CD8-positive, alpha-beta T cell (primary cell): ENCODE measurements at regions of chr2 and their contacts with region 1.

Region 1: GRCh38 chr2:240245706-240246105 is 105.2 kb upstream of the OTOS start:
- DNase-seq: peak in 2 of 9 experiments; percentile 2 to 37
- ATAC-seq: no peak
- H3K4me3 ChIP-seq: no peak overlapping the region
- H3K4me3 Mint-ChIP-seq: no peak overlapping the region
- H3K27ac ChIP-seq: no peak overlapping the region
- H3K27ac Mint-ChIP-seq: no peak overlapping the region
- H3K4me1 ChIP-seq: no peaks in the 10 kb centered on the region
- H3K4me1 Mint-ChIP-seq: no peaks in the 10 kb centered on the region
- H3K27me3 ChIP-seq: no peaks in the 10 kb centered on the region
- H3K27me3 Mint-ChIP-seq: peaks cover 16% of the 10 kb centered on the region
- CTCF ChIP-seq: no peak

Region 2: GRCh38 chr2:240255811-240256703 is 10.4 kb after region 1 on chr2:
- CTCF ChIA-PET with region 1: no interaction called
- POLR2A ChIA-PET with region 1: no interaction called
- intact Hi-C with region 1: no loop called
- DNase-seq: no peak
- ATAC-seq: no peak
- H3K4me3 ChIP-seq: no peak overlapping the region
- H3K4me3 Mint-ChIP-seq: no peak overlapping the region
- H3K27ac ChIP-seq: no peak overlapping the region
- H3K27ac Mint-ChIP-seq: no peak overlapping the region
- H3K4me1 ChIP-seq: no peaks in the 10 kb centered on the region
- H3K4me1 Mint-ChIP-seq: no peaks in the 10 kb centered on the region
- H3K27me3 ChIP-seq: no peaks in the 10 kb centered on the region
- H3K27me3 Mint-ChIP-seq: peaks cover 11% of the 10 kb centered on the region
- CTCF ChIP-seq: no peak

Region 3: GRCh38 chr2:240320204-240320993 is 74.7 kb after region 1 on chr2:
- CTCF ChIA-PET with region 1: no interaction called
- POLR2A ChIA-PET with region 1: no interaction called
- intact Hi-C with region 1: loop called in 1 of 2 experiments (anchors 2 kb)
- DNase-seq: no peak
- ATAC-seq: no peak
- H3K4me3 ChIP-seq: no peak overlapping the region
- H3K4me3 Mint-ChIP-seq: no peak overlapping the region
- H3K27ac ChIP-seq: no peak overlapping the region
- H3K27ac Mint-ChIP-seq: no peak overlapping the region
- H3K4me1 ChIP-seq: no peaks in the 10 kb centered on the region
- H3K4me1 Mint-ChIP-seq: no peaks in the 10 kb centered on the region
- H3K27me3 ChIP-seq: no peaks in the 10 kb centered on the region
- H3K27me3 Mint-ChIP-seq: peaks cover 14% of the 10 kb centered on the region
- CTCF ChIP-seq: no peak

Region 4: GRCh38 chr2:240640939-240641338 is 395.2 kb after region 1 on chr2:
- CTCF ChIA-PET with region 1: no interaction called
- POLR2A ChIA-PET with region 1: no interaction called
- intact Hi-C with region 1: no loop called
- DNase-seq: peak in 5 of 9 experiments; percentile 8 to 48 (median 30)
- ATAC-seq: no peak
- H3K4me3 ChIP-seq: no peak overlapping the region
- H3K4me3 Mint-ChIP-seq: no peak overlapping the region
- H3K27ac ChIP-seq: no peak overlapping the region
- H3K27ac Mint-ChIP-seq: peak overlapping the region; percentile 41
- H3K4me1 ChIP-seq: no peaks in the 10 kb centered on the region
- H3K4me1 Mint-ChIP-seq: peaks cover 5% of the 10 kb centered on the region
- H3K27me3 ChIP-seq: no peaks in the 10 kb centered on the region
- H3K27me3 Mint-ChIP-seq: no peaks in the 10 kb centered on the region
- CTCF ChIP-seq: no peak